Heart right ventricle (tissue), 16 donors: ENCODE measurements at regions of chr19 and their contacts with region 1.

Region 1: GRCh38 chr19:36060430-36060829 is 5.7 kb downstream of the WDR62 start:
- DNase-seq: peak; percentile 16 to 54
- ATAC-seq: peak; percentile 45 to 89 (median 83)
- H3K4me3 ChIP-seq: no peak overlapping the region
- H3K27ac ChIP-seq: no peak overlapping the region
- H3K4me1 ChIP-seq: peaks cover under 1 to 7% (median 3%) of the 10 kb centered on the region in 9 donors
- H3K27me3 ChIP-seq: no peaks in the 10 kb centered on the region
- CTCF ChIP-seq: peak in 8 of 9 donors; percentile 38 to 70 (median 61)

Region 2: DNA sequence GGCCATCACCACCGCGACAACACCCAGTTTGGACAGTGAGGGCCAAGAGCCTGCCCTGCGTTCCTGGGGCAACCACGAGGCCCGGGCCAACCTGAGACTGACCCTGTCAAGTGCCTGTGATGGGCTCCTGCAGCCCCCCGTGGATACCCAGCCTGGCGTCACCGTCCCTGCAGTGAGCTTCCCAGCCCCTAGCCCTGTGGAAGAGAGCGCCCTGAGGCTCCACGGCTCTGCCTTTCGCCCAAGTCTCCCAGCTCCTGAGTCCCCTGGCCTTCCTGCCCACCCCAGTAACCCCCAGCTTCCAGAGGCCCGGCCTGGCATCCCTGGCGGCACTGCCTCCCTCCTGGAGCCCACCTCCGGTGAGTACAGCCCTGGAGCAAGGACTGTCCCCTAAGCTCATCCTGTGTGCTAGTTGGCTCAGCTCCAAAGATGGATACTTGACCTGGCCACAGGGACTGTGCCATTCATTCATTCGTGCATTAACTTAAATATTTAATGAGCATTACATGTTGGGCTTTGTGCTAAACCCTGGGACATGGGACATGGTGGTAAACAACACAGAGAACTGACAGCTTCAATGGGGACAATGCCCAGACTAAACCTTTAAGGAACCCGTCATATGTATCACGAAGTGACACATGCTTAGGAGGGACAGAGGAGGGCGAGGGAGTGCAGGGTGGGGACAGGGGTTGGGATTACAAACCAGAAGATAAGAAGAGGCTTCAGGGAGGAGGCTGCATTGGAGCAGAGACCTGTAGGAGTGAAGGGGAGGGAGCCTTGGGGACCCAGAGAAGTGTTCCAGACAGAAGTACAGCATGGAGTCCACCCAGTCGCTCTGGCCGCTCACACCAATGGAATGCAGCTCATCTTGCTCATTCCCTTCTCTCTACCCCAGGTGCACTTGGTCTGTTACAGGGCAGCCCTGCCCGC is 43.5 kb after region 1 on chr19:
- intact Hi-C with region 1: loop called in 2 of 10 experiments (anchors 5 kb)
- DNase-seq: no peak
- ATAC-seq: no peak
- H3K4me3 ChIP-seq: no peak overlapping the region
- H3K27ac ChIP-seq: no peak overlapping the region
- H3K4me1 ChIP-seq: peaks cover 0 to 31% (median 16%) of the 10 kb centered on the region in 9 donors
- H3K27me3 ChIP-seq: no peaks in the 10 kb centered on the region
- CTCF ChIP-seq: no peak

Region 3: GRCh38 chr19:36114763-36115452 is 54.5 kb after region 1 on chr19 and contains the start of gene POLR2I:
- intact Hi-C with region 1: loop called in 7 of 10 experiments (anchors 2 to 10 kb)
- DNase-seq: peak; percentile 98 to 100
- ATAC-seq: peak; percentile 93 to 98 (median 96)
- H3K4me3 ChIP-seq: peak within 1 kb of the TSS; percentile 71 to 90 (median 78)
- H3K27ac ChIP-seq: peak within 1 kb of the TSS; percentile 41 to 93 (median 89)
- H3K4me1 ChIP-seq: peaks cover 7 to 30% (median 24%) of the 10 kb centered on the region in 9 donors
- H3K27me3 ChIP-seq: no peaks in the 10 kb centered on the region
- CTCF ChIP-seq: no peak
- total RNA-seq, gene POLR2I: 83.7 to 139 (median 105) TPM

Region 4: GRCh38 chr19:36169084-36169760 is 108.8 kb after region 1 on chr19:
- intact Hi-C with region 1: loop called in 9 of 10 experiments (anchors 2 to 10 kb)
- DNase-seq: peak; percentile 18 to 37
- ATAC-seq: peak; percentile 41 to 79 (median 57)
- H3K4me3 ChIP-seq: peak overlapping the region in 1 of 10 donors; percentile 1
- H3K27ac ChIP-seq: peak overlapping the region; percentile 60 to 89 (median 74)
- H3K4me1 ChIP-seq: peaks cover 0 to 28% (median 19%) of the 10 kb centered on the region in 9 donors
- H3K27me3 ChIP-seq: no peaks in the 10 kb centered on the region
- CTCF ChIP-seq: no peak